Natural killer cell (primary cell): ENCODE measurements at regions of chr1 and their contacts with region 1.

Region 1: DNA sequence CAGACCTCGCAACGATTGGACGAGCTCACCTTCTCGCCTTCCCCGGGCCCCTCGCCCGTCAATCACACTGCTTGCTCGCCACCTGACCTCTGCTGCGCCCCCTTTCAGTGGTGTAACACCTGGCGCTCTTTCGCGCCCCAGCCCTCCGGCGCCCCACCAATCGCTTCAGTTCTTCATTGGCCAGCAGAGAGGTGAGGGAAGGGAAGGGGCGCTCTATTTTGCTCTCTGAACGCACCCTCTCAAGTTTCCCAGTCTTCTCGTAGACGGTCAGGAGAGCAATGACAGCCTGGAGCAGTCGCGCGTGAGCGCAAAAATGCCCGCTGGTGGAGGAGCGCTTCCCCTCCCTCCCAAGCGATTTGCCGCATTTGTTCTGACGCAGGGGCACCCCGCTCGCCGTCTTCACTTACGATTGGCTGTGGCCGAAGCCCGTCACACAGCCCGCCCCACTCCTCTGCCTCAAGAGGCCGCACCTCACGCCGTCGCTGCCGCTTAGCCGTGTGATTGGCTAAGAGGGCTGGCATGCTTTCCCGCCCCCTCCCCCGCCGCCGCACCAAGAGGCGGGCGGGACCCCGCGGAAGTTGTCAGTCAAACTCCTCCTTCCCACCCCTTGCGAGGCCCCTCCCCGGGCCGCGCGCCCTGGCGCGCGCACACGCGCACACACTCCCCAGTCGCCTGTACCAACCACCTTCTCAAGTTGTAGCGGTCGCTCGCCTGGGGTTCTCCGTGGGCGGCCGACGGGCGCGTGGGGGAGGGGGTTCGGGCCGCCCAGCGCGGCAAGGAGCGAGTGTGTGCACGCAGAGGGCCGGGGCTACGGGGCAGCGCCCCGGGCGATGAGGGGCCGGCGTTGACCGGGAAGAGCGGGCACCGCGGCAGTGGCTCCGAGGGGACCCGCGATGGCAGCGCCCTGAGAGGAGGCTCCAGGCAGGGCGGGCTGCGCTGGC is at the start of gene PPP2R5A:
- DNase-seq: peak; percentile 98 to 99
- ATAC-seq: peak; percentile 82 to 95 (median 85)
- H3K4me3 ChIP-seq: peak within 1 kb of the TSS; percentile 100
- H3K4me3 Mint-ChIP-seq: peak within 1 kb of the TSS; percentile 97
- H3K27ac ChIP-seq: peak within 1 kb of the TSS; percentile 97
- H3K27ac Mint-ChIP-seq: peak within 1 kb of the TSS; percentile 96 to 99
- H3K4me1 ChIP-seq: peaks cover 12% of the 10 kb centered on the region
- H3K4me1 Mint-ChIP-seq: peaks cover 48 to 58% of the 10 kb centered on the region in 2 donors
- H3K27me3 ChIP-seq: no peaks in the 10 kb centered on the region
- H3K27me3 Mint-ChIP-seq: no peaks in the 10 kb centered on the region
- CTCF ChIP-seq: peak; percentile 38
- total RNA-seq, gene PPP2R5A: 74.0 to 99.8 (median 86.4) TPM

Region 2: DNA sequence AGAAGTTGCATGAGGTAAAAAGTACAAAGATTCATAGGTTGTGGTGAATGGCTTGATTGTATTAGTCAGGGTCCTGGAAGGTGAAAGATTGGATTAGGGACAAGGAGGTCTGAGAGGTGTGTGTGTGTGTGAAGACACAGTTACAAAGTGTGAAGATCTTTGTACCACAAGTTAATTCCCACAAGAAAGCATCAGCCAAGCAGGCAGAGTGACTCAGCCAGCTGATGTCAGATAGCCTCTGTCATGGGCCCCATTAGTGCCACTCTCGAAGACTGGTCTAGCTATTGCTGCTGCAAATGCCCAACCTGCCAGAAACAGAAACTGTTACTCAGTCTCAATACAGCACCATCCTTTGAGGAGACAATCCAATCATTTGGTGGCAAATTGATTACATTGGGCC is 153.0 kb before region 1 on chr1:
- intact Hi-C with region 1: loop called (anchors 5 kb)
- DNase-seq: peak; percentile 15 to 28
- ATAC-seq: peak; percentile 90 to 98 (median 92)
- H3K4me3 ChIP-seq: no peak overlapping the region
- H3K4me3 Mint-ChIP-seq: no peak overlapping the region
- H3K27ac ChIP-seq: peak overlapping the region; percentile 4
- H3K27ac Mint-ChIP-seq: peak overlapping the region; percentile 1 to 27
- H3K4me1 ChIP-seq: peaks cover 11% of the 10 kb centered on the region
- H3K4me1 Mint-ChIP-seq: peaks cover 11 to 14% of the 10 kb centered on the region in 2 donors
- H3K27me3 ChIP-seq: no peaks in the 10 kb centered on the region
- H3K27me3 Mint-ChIP-seq: no peaks in the 10 kb centered on the region
- CTCF ChIP-seq: no peak

Region 3: GRCh38 chr1:212225871-212226302 is 59.1 kb before region 1 on chr1:
- intact Hi-C with region 1: loop called (anchors 1 kb)
- DNase-seq: no peak
- ATAC-seq: peak; percentile 20 to 46 (median 32)
- H3K4me3 ChIP-seq: no peak overlapping the region
- H3K4me3 Mint-ChIP-seq: peak overlapping the region; percentile 86
- H3K27ac ChIP-seq: peak overlapping the region; percentile 88
- H3K27ac Mint-ChIP-seq: peak overlapping the region; percentile 90 to 94
- H3K4me1 ChIP-seq: peaks cover 26% of the 10 kb centered on the region
- H3K4me1 Mint-ChIP-seq: peaks cover 50 to 55% of the 10 kb centered on the region in 2 donors
- H3K27me3 ChIP-seq: no peaks in the 10 kb centered on the region
- H3K27me3 Mint-ChIP-seq: no peaks in the 10 kb centered on the region
- CTCF ChIP-seq: no peak

Region 4: DNA sequence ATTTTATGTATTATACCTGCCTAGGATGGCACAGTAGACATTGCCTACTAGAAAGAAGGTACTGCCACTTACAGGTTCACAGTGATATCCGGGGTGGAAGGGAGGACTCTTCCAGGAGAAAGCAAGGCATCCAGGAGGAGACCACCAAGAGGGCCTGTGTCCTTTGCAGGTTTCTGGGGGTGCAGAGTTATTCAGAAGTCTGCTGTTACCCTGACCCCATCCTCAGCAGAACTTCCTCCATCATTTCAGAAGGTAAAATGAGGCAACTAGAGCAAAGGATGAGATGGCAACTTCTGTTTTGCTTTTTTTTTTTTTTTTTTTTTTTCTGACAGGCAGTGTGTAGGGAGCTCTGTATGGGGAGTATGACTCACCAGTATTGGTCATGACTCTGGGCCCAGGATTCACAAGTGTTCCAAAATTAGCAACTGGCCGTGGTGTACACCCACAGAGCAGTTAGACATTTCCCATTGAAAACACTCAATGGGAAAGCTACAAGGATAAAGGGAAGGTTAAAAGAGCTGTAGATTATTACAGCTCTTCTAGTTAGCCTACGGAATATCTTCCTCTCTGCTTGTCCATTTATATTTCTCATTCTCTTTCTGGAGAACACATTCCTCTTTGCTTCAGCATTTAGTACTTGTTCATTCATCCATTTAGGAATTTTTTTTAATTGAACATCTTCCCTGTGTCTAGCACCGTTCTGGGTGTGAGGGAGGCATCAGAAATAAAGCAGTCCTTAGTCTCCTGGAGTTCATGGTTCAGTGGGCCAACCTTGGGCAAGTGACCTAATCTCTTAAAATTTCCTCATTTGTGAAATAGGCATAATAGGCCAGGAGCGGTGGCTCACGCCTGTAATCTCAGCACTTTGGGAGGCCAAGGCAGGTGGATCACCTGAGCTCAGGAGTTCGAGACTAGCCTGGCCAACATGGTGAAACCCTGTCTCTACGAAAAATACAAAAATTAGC is 50.3 kb before region 1 on chr1:
- intact Hi-C with region 1: loop called (anchors 2 kb)
- DNase-seq: peak in 1 of 2 donors; percentile 14
- ATAC-seq: peak; percentile 72 to 87 (median 74)
- H3K4me3 ChIP-seq: no peak overlapping the region
- H3K4me3 Mint-ChIP-seq: no peak overlapping the region
- H3K27ac ChIP-seq: no peak overlapping the region
- H3K27ac Mint-ChIP-seq: peak overlapping the region in 1 of 2 donors; percentile 57
- H3K4me1 ChIP-seq: peaks cover 22% of the 10 kb centered on the region
- H3K4me1 Mint-ChIP-seq: peaks cover 42 to 64% of the 10 kb centered on the region in 2 donors
- H3K27me3 ChIP-seq: no peaks in the 10 kb centered on the region
- H3K27me3 Mint-ChIP-seq: no peaks in the 10 kb centered on the region
- CTCF ChIP-seq: no peak

Region 5: GRCh38 chr1:212302745-212303383 is 17.9 kb after region 1 on chr1:
- intact Hi-C with region 1: no loop called
- DNase-seq: no peak
- ATAC-seq: no peak
- H3K4me3 ChIP-seq: no peak overlapping the region
- H3K4me3 Mint-ChIP-seq: no peak overlapping the region
- H3K27ac ChIP-seq: no peak overlapping the region
- H3K27ac Mint-ChIP-seq: peak overlapping the region in 1 of 2 donors; percentile 27
- H3K4me1 ChIP-seq: peaks cover 3% of the 10 kb centered on the region
- H3K4me1 Mint-ChIP-seq: peaks cover 55 to 57% of the 10 kb centered on the region in 2 donors
- H3K27me3 ChIP-seq: no peaks in the 10 kb centered on the region
- H3K27me3 Mint-ChIP-seq: no peaks in the 10 kb centered on the region
- CTCF ChIP-seq: no peak

Region 6: DNA sequence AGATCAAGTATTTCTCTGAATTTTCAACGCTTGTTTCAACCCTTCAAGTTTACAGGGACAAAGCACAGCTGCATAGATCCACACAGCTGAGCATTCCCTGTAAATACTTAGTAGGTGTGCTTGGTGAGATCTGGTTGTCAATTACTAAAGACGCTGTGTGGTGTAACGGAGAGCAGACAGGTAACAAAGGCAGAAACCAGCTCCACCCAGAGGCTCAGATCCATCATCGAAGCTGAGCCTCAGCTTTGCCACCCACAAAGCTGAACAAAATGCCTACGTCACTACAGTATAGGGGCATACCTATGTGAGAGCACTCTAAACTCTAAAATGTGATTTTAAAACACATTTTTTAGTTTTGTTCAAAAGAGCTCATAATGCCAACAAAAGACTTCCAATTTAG is 91.0 kb after region 1 on chr1:
- intact Hi-C with region 1: no loop called
- DNase-seq: no peak
- ATAC-seq: no peak
- H3K4me3 ChIP-seq: no peak overlapping the region
- H3K4me3 Mint-ChIP-seq: no peak overlapping the region
- H3K27ac ChIP-seq: no peak overlapping the region
- H3K27ac Mint-ChIP-seq: peak overlapping the region; percentile 32 to 39
- H3K4me1 ChIP-seq: no peaks in the 10 kb centered on the region
- H3K4me1 Mint-ChIP-seq: peaks cover 0 to 5% of the 10 kb centered on the region in 2 donors
- H3K27me3 ChIP-seq: no peaks in the 10 kb centered on the region
- H3K27me3 Mint-ChIP-seq: no peaks in the 10 kb centered on the region
- CTCF ChIP-seq: no peak